Caco-2 (cell line): ENCODE measurements at regions of chr12 and their contacts with region 1.

Region 1: DNA sequence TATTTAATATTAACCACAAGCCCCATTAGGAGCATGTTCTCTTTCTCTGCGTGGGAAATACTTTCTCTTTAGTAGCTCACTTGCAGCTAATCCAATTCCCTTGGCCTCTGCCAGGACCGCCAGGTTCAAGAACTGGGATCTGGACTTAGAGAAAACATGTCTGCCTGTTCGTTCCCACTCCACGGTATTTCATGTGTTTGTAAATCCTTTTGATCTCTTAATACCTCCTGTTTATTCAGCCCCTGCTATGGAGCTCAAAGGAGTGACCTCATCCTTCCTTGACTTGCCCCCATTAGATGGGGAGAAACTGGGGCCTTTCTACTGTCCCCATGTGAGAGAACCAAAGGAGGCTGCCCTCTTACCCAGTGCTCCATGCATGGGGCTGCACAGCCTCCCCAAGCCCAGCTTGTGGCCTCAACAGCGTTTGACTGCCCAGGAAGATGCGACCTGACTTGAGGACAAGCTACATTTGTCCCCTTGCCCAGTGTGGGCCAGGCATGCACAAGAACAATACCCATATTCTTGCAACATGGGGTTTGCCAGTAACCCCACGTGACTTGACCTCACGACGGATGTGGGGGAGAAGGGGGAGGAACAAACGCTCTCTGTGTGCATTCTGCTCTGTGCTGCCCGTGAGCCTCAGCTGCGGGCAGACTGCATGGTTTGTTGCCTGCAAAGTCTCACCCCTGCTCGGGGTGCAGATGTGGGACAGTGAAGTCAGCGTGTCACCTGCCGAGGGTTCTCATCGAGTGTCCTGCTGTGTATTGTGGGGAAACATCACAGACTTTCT is 30.3 kb downstream of the CD9 start:
- DNase-seq: no peak
- H3K4me3 ChIP-seq: no peak overlapping the region
- H3K4me3 Mint-ChIP-seq: peak overlapping the region; percentile 58
- H3K27ac Mint-ChIP-seq: peak overlapping the region; percentile 96
- H3K4me1 ChIP-seq: peaks cover 81% of the 10 kb centered on the region
- H3K4me1 Mint-ChIP-seq: peaks cover 78% of the 10 kb centered on the region
- H3K27me3 ChIP-seq: no peaks in the 10 kb centered on the region
- H3K27me3 Mint-ChIP-seq: no peaks in the 10 kb centered on the region
- CTCF ChIP-seq: no peak

Region 2: DNA sequence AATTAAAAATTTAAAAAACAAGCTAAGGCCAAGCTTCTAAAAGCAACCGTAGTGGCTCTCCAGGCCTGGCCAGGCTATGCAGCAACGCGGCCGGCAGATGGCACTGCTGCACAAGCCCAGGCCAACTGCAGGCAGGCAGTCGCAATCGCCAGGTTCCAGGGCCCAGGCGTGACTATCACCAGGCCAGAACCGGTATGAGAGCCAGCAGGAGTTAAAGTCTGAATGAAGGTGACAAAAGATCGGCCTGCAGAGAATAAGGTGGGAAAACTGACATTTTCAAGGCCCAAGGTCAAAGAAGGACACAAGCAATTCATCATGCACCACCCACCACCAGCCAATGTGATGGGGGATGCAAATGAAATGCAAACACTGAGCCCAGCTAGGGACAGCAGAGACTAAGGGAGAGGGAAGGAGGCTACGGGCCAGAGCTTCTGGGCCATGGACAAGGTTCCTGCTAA is 241.8 kb before region 1 on chr12:
- CTCF ChIA-PET with region 1: interaction called, 10 read pairs
- POLR2A ChIA-PET with region 1: no interaction called
- intact Hi-C with region 1: no loop called
- DNase-seq: peak; percentile 82 to 92
- H3K4me3 ChIP-seq: no peak overlapping the region
- H3K4me3 Mint-ChIP-seq: no peak overlapping the region
- H3K27ac Mint-ChIP-seq: no peak overlapping the region
- H3K4me1 ChIP-seq: no peaks in the 10 kb centered on the region
- H3K4me1 Mint-ChIP-seq: peaks cover 6% of the 10 kb centered on the region
- H3K27me3 ChIP-seq: no peaks in the 10 kb centered on the region
- H3K27me3 Mint-ChIP-seq: no peaks in the 10 kb centered on the region
- CTCF ChIP-seq: peak; percentile 98 to 99

Region 3: DNA sequence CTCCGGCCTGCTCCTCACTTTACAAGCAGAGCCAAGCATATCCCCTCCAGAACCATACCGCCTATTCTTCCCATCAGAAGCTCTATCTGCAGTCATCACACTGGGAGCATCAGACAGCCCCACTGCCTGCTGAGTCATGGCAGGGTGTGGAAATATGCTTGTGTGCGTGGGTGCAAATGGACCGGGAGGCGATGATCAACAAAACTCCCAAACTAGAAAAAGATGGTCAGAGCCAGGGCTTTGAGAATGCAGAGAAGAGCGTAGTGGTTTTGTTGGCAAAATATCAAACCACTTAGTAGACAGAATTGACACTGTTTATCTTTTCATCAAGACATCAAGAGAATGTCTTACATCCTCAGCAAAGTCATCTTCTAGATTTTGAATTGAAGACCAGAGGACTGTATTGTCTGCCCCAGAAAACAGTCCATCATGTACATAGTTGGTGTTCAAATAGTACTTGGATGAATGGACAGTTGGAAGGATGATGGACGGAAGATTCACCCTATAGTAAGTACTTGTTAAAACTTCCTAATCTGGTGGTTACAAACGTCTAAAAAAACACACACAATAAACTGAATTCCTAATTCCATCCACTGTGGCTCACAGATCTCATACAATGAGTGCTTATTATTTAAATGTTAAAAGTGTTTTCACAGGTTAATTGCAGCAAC is 160.9 kb before region 1 on chr12:
- CTCF ChIA-PET with region 1: interaction called, 15 read pairs
- POLR2A ChIA-PET with region 1: no interaction called
- intact Hi-C with region 1: no loop called
- DNase-seq: no peak
- H3K4me3 ChIP-seq: no peak overlapping the region
- H3K4me3 Mint-ChIP-seq: no peak overlapping the region
- H3K27ac Mint-ChIP-seq: no peak overlapping the region
- H3K4me1 ChIP-seq: peaks cover 41% of the 10 kb centered on the region
- H3K4me1 Mint-ChIP-seq: peaks cover 59% of the 10 kb centered on the region
- H3K27me3 ChIP-seq: no peaks in the 10 kb centered on the region
- H3K27me3 Mint-ChIP-seq: no peaks in the 10 kb centered on the region
- CTCF ChIP-seq: no peak

Region 4: GRCh38 chr12:6084261-6084968 is 146.1 kb before region 1 on chr12:
- CTCF ChIA-PET with region 1: interaction called, 10 read pairs
- POLR2A ChIA-PET with region 1: interaction called, 5 read pairs
- intact Hi-C with region 1: no loop called
- DNase-seq: peak; percentile 84 to 93
- H3K4me3 ChIP-seq: no peak overlapping the region
- H3K4me3 Mint-ChIP-seq: peak overlapping the region; percentile 44
- H3K27ac Mint-ChIP-seq: peak overlapping the region; percentile 92
- H3K4me1 ChIP-seq: peaks cover 59% of the 10 kb centered on the region
- H3K4me1 Mint-ChIP-seq: peaks cover 34% of the 10 kb centered on the region
- H3K27me3 ChIP-seq: no peaks in the 10 kb centered on the region
- H3K27me3 Mint-ChIP-seq: no peaks in the 10 kb centered on the region
- CTCF ChIP-seq: no peak

Region 5: GRCh38 chr12:6195665-6196535 is 34.6 kb before region 1 on chr12:
- CTCF ChIA-PET with region 1: interaction called, 23 read pairs
- POLR2A ChIA-PET with region 1: interaction called, 5 read pairs
- intact Hi-C with region 1: loop called (anchors 1 kb)
- DNase-seq: peak; percentile 93 to 98
- H3K4me3 ChIP-seq: no peak overlapping the region
- H3K4me3 Mint-ChIP-seq: no peak overlapping the region
- H3K27ac Mint-ChIP-seq: peak overlapping the region; percentile 55
- H3K4me1 ChIP-seq: peaks cover 63% of the 10 kb centered on the region
- H3K4me1 Mint-ChIP-seq: peaks cover 53% of the 10 kb centered on the region
- H3K27me3 ChIP-seq: no peaks in the 10 kb centered on the region
- H3K27me3 Mint-ChIP-seq: no peaks in the 10 kb centered on the region
- CTCF ChIP-seq: peak; percentile 96 to 97

Region 6: GRCh38 chr12:6241495-6241894 is 11.0 kb after region 1 on chr12:
- CTCF ChIA-PET with region 1: interaction called, 4 read pairs
- POLR2A ChIA-PET with region 1: interaction called, 3 read pairs
- intact Hi-C with region 1: loop called (anchors 1 kb)
- DNase-seq: no peak
- H3K4me3 ChIP-seq: no peak overlapping the region
- H3K4me3 Mint-ChIP-seq: no peak overlapping the region
- H3K27ac Mint-ChIP-seq: no peak overlapping the region
- H3K4me1 ChIP-seq: no peaks in the 10 kb centered on the region
- H3K4me1 Mint-ChIP-seq: peaks cover 8% of the 10 kb centered on the region
- H3K27me3 ChIP-seq: no peaks in the 10 kb centered on the region
- H3K27me3 Mint-ChIP-seq: no peaks in the 10 kb centered on the region
- CTCF ChIP-seq: no peak

Region 7: GRCh38 chr12:6278439-6279255 is 48.1 kb after region 1 on chr12:
- CTCF ChIA-PET with region 1: interaction called, 23 read pairs
- POLR2A ChIA-PET with region 1: interaction called, 15 read pairs
- intact Hi-C with region 1: loop called (anchors 1 kb)
- DNase-seq: peak; percentile 89 to 97
- H3K4me3 ChIP-seq: peak overlapping the region; percentile 52
- H3K4me3 Mint-ChIP-seq: peak overlapping the region; percentile 80
- H3K27ac Mint-ChIP-seq: peak overlapping the region; percentile 93
- H3K4me1 ChIP-seq: peaks cover 23% of the 10 kb centered on the region
- H3K4me1 Mint-ChIP-seq: peaks cover 42% of the 10 kb centered on the region
- H3K27me3 ChIP-seq: no peaks in the 10 kb centered on the region
- H3K27me3 Mint-ChIP-seq: no peaks in the 10 kb centered on the region
- CTCF ChIP-seq: peak; percentile 34 to 99